T-cell (primary cell): ENCODE measurements at regions of chr10 and their contacts with region 1.

Region 1: DNA sequence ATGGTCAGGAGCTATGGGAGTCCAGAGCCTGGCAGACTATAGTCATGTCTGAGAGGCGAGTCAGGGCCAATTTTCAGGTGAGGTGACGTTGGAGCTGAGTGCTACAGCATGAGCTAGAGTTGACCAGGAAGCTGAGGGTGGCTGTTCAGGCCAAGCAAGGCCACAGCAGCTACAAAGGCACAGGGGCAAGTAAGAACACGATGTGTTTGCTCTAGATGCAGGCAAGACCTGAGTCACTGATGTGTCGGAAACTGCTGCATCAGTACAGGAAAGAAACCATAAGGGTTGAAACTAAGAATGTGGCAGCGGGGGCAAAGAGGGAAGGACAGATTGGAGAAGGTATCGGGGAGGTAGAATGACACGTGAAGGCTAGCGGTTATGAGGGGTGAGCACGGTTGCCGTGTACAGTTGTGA is 11.8 kb upstream of the RRP12 start:
- DNase-seq: no peak
- ATAC-seq: no peak
- H3K4me3 ChIP-seq: no peak overlapping the region
- H3K4me3 Mint-ChIP-seq: peak overlapping the region in 1 of 3 donors; percentile 2
- H3K27ac ChIP-seq: peak overlapping the region; percentile 60
- H3K27ac Mint-ChIP-seq: peak overlapping the region; percentile 41 to 75
- H3K4me1 ChIP-seq: peaks cover 21 to 45% of the 10 kb centered on the region in 2 experiments
- H3K4me1 Mint-ChIP-seq: peaks cover 37 to 42% (median 39%) of the 10 kb centered on the region in 3 donors
- H3K27me3 ChIP-seq: no peaks in the 10 kb centered on the region
- H3K27me3 Mint-ChIP-seq: no peaks in the 10 kb centered on the region

Region 2: DNA sequence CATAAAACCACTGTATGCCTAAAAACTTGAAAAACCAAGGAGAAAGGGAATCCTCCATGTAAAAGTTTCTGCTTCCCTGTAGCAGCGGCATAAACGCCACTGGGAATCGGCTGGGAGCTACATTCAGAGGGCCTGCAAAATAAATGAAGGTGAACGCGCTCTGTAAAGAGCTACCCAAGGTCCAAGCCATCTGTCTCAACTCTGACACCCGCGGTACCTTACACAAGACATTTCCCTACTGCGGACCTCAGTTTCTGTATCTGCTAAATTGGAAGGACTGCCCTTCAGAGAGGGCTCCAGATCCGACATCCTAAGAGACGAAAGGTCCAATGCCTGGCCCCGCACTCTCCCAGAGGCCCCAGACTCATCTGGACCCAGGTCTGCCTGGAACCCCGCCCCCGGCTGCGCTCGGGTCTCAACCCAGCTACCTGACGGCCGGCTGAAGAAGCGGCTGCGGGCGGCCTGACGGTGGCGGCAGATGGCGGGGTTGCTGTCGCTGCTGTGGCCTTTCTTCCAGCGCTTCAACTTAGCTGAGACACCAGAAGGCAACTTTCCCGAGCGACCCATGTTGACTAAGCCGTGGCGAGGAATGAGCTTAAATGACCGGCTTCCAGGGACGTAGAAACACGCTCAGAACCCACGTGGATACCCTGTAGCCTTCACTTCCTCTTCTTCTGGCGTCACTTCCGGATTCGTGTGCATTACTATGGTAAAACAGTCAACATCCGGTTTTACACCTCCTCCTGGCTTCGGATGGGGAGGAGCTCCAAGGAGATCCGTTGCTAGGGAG is 12.0 kb before region 1 on chr10 and contains the start of gene RRP12:
- CTCF ChIA-PET with region 1: interaction called in 1 of 2 experiments, 11 read pairs
- POLR2A ChIA-PET with region 1: interaction called, 6 to 16 read pairs
- DNase-seq: peak; percentile 47 to 97 (median 85)
- ATAC-seq: peak; percentile 96 to 99 (median 99)
- H3K4me3 ChIP-seq: peak within 1 kb of the TSS; percentile 69 to 95
- H3K4me3 Mint-ChIP-seq: peak within 1 kb of the TSS; percentile 93 to 98 (median 95)
- H3K27ac ChIP-seq: peak within 1 kb of the TSS; percentile 85
- H3K27ac Mint-ChIP-seq: peak within 1 kb of the TSS; percentile 93
- H3K4me1 ChIP-seq: peaks cover 5 to 16% of the 10 kb centered on the region in 2 experiments
- H3K4me1 Mint-ChIP-seq: peaks cover 15 to 20% (median 16%) of the 10 kb centered on the region in 3 donors
- H3K27me3 ChIP-seq: no peaks in the 10 kb centered on the region
- H3K27me3 Mint-ChIP-seq: no peaks in the 10 kb centered on the region
- total RNA-seq, gene RRP12: 25.9 to 91.4 (median 33.5) TPM

Region 3: GRCh38 chr10:97445722-97446639 is 33.1 kb after region 1 on chr10 and contains the starts of genes EXOSC1 and ZDHHC16:
- CTCF ChIA-PET with region 1: interaction called, 3 read pairs
- POLR2A ChIA-PET with region 1: interaction called in 1 of 2 experiments, 16 read pairs
- DNase-seq: peak; percentile 72 to 93 (median 86)
- ATAC-seq: peak; percentile 97 to 98 (median 98)
- H3K4me3 ChIP-seq: peak within 1 kb of the TSS; percentile 72 to 88
- H3K4me3 Mint-ChIP-seq: peak within 1 kb of the TSS; percentile 98 to 99 (median 98)
- H3K27ac ChIP-seq: peak within 1 kb of the TSS; percentile 52
- H3K27ac Mint-ChIP-seq: peak within 1 kb of the TSS; percentile 91 to 94
- H3K4me1 ChIP-seq: peaks cover 8 to 19% of the 10 kb centered on the region in 2 experiments
- H3K4me1 Mint-ChIP-seq: peaks cover 39 to 56% (median 55%) of the 10 kb centered on the region in 3 donors
- H3K27me3 ChIP-seq: no peaks in the 10 kb centered on the region
- H3K27me3 Mint-ChIP-seq: no peaks in the 10 kb centered on the region
- total RNA-seq, gene EXOSC1: 32.2 to 51.0 (median 46.8) TPM
- total RNA-seq, gene ZDHHC16: 16.1 to 38.8 (median 36.2) TPM

Region 4: DNA sequence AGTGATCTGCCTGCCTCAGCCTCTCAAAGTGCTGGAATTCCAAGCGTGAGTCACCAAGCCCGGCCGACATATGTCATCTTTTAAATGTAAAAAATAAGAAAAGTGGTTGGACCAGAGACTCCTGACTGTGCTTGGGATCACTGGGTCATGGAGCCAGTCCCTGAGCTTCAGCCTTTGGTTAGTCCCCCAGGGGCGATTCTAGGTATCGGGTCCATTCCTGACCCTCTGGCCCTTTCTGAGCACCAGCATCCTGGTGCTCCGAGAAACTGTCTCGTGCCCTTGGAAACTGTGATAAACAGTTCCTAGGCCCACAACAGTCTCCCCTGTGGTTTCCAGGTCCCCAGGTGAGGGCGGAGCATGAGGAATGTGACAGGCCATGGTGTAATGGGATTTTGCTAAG is 118.6 kb after region 1 on chr10:
- CTCF ChIA-PET with region 1: interaction called, 3 to 13 read pairs
- POLR2A ChIA-PET with region 1: no interaction called
- DNase-seq: no peak
- ATAC-seq: no peak
- H3K4me3 ChIP-seq: no peak overlapping the region
- H3K4me3 Mint-ChIP-seq: no peak overlapping the region
- H3K27ac ChIP-seq: no peak overlapping the region
- H3K27ac Mint-ChIP-seq: no peak overlapping the region
- H3K4me1 ChIP-seq: no peaks in the 10 kb centered on the region
- H3K4me1 Mint-ChIP-seq: no peaks in the 10 kb centered on the region
- H3K27me3 ChIP-seq: no peaks in the 10 kb centered on the region
- H3K27me3 Mint-ChIP-seq: no peaks in the 10 kb centered on the region